ENCODE measurements at regions of chr7 and their contacts with region 1.

Region 1: DNA sequence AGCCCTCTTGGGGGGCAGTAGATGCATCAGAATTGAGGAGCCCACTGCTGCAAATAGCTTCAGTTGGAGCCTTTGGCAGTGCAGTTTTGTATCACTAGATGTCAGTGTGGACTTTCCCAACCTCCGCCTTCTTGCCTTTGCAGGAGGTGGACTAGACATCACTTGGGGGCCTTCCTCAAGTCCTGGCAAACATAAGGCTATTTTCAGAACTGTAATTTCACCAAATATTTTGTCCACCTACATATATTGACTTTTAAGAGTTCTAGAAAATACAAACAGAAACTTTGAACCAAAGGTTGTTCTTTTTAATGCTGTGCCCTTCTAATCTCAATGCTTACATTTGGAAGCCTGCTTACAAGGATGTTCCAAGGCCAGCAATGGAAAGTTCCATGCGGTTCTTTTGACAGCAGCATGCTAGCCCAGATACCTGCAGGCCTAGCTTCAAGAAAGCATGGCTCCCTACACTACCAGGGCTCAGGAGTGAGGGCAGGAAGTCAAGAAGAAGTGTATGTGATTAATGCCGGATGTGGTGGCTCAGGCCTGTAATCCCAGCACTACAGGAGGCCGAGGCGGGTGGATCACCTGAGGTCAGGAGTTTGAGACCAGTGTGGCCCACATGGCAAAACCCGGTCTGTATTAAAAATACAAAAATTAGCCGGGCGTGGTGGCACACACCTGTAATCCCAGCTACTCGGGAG is 8.0 kb upstream of the ZNRF2 start:
- DNase-seq: no peak
- ATAC-seq: peak; percentile 93
- H3K4me3 ChIP-seq: no peak overlapping the region
- H3K27ac ChIP-seq: no peak overlapping the region
- H3K4me1 ChIP-seq: peaks cover 9% of the 10 kb centered on the region; the same call in 1 of the 2 replicates
- H3K27me3 ChIP-seq: no peaks in the 10 kb centered on the region
- CTCF ChIP-seq: peak; percentile 83 to 91 (median 84)
- EP300 ChIP-seq: no peak
- POLR2A ChIP-seq: no peak
- RAD21 ChIP-seq: peak; percentile 93

Region 2: GRCh38 chr7:30173058-30173897 is 103.1 kb before region 1 on chr7:
- CTCF ChIA-PET with region 1: interaction called, 30 read pairs
- POLR2A ChIA-PET with region 1: interaction called, 3 read pairs
- RAD21 ChIA-PET with region 1: interaction called, 42 read pairs
- SMC1A ChIA-PET with region 1: interaction called, 35 read pairs
- in situ Hi-C with region 1: no loop called
- intact Hi-C with region 1: no loop called
- DNase-seq: no peak
- ATAC-seq: no peak
- H3K4me3 ChIP-seq: no peak overlapping the region
- H3K27ac ChIP-seq: no peak overlapping the region
- H3K4me1 ChIP-seq: peaks cover 15% of the 10 kb centered on the region
- H3K27me3 ChIP-seq: no peaks in the 10 kb centered on the region
- CTCF ChIP-seq: no peak
- EP300 ChIP-seq: no peak
- POLR2A ChIP-seq: no peak
- RAD21 ChIP-seq: no peak

Region 3: DNA sequence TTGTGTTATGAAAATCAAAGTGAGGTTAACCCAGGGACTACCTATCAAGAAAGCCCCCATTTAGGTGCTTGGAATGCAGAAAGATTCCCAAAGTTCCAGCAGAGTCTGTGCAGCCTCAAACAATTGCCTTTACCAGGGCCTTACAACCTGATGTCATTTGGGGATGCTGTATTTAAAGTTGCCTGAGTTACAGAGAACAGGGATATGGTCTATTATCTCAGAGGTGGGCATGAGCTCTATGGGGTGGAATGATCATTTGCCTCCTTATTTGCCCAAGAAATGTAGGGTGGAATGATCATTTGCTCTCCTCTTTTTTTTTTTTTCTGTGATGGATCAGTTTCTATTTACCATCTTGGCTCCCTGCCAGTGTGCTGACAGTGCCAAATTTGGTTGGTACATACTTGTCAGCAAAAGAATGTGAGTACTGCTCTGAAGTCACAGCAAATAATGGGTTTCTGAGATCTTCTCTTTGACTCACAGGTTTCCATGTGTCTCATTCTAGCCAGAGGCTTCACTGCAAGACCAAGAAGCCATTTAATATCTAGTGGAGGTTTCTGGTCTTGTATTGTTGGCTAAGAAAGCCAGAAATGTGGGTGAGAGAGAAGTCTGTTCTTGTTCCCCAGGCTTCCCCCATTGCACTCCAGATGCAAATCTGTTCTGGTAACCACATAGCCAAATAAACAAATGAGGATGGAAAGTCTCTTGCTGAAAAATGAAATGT is 37.5 kb before region 1 on chr7:
- CTCF ChIA-PET with region 1: interaction called, 12 read pairs
- POLR2A ChIA-PET with region 1: no interaction called
- RAD21 ChIA-PET with region 1: interaction called, 17 read pairs
- SMC1A ChIA-PET with region 1: interaction called, 8 read pairs
- in situ Hi-C with region 1: no loop called
- intact Hi-C with region 1: no loop called
- DNase-seq: peak; percentile 75
- ATAC-seq: peak; percentile 83
- H3K4me3 ChIP-seq: no peak overlapping the region; the same call in 1 of the 2 replicates
- H3K27ac ChIP-seq: peak overlapping the region; percentile 9; the same call in 1 of the 2 replicates
- H3K4me1 ChIP-seq: peaks cover 27% of the 10 kb centered on the region
- H3K27me3 ChIP-seq: no peaks in the 10 kb centered on the region
- CTCF ChIP-seq: no peak
- EP300 ChIP-seq: peak in 1 of 2 experiments; percentile 67; a peak in 2 of 4 replicates
- POLR2A ChIP-seq: no peak
- RAD21 ChIP-seq: no peak

Region 4: GRCh38 chr7:30330134-30331111 is 54.1 kb after region 1 on chr7:
- CTCF ChIA-PET with region 1: interaction called, 11 read pairs
- POLR2A ChIA-PET with region 1: no interaction called
- RAD21 ChIA-PET with region 1: interaction called, 8 read pairs
- SMC1A ChIA-PET with region 1: interaction called, 26 read pairs
- in situ Hi-C with region 1: no loop called
- intact Hi-C with region 1: no loop called
- DNase-seq: peak; percentile 74
- ATAC-seq: peak; percentile 96
- H3K4me3 ChIP-seq: peak overlapping the region; percentile 4; the same call in 1 of the 2 replicates
- H3K27ac ChIP-seq: peak overlapping the region; percentile 60
- H3K4me1 ChIP-seq: peaks cover 20% of the 10 kb centered on the region
- H3K27me3 ChIP-seq: no peaks in the 10 kb centered on the region
- CTCF ChIP-seq: no peak
- EP300 ChIP-seq: peak; percentile 49 to 53; a peak in 1 of 4 replicates
- POLR2A ChIP-seq: no peak
- RAD21 ChIP-seq: no peak

Region 5: DNA sequence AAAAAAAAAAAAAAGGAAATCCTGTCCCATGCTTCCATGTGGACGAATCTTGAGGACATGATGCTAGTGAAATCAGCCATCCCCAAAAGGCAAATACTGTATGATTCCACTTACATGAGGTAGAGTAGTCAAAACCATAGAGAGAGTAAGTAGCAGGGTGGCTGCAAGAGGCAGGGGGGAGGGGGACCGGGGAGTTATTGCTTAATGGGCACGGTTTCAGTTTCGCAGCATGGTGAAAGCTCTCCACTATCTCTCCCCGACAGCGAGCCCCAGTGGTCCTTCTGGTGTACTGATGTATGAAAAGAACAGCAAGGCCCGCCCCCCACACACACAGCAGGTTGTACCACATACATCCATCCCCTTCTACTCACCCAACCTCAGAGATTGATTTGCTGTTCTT is 169.4 kb after region 1 on chr7:
- CTCF ChIA-PET with region 1: interaction called, 19 read pairs
- POLR2A ChIA-PET with region 1: interaction called, 3 read pairs
- RAD21 ChIA-PET with region 1: interaction called, 19 read pairs
- SMC1A ChIA-PET with region 1: interaction called, 9 read pairs
- in situ Hi-C with region 1: no loop called
- intact Hi-C with region 1: loop called (anchors 10 kb)
- DNase-seq: peak; percentile 82
- ATAC-seq: peak; percentile 99
- H3K4me3 ChIP-seq: no peak overlapping the region
- H3K27ac ChIP-seq: no peak overlapping the region
- H3K4me1 ChIP-seq: peaks cover 4% of the 10 kb centered on the region
- H3K27me3 ChIP-seq: no peaks in the 10 kb centered on the region
- CTCF ChIP-seq: peak; percentile 68 to 71 (median 70)
- EP300 ChIP-seq: peak in 1 of 2 experiments; percentile 60; a peak in 2 of 4 replicates
- POLR2A ChIP-seq: no peak
- RAD21 ChIP-seq: peak; percentile 81

Region 6: DNA sequence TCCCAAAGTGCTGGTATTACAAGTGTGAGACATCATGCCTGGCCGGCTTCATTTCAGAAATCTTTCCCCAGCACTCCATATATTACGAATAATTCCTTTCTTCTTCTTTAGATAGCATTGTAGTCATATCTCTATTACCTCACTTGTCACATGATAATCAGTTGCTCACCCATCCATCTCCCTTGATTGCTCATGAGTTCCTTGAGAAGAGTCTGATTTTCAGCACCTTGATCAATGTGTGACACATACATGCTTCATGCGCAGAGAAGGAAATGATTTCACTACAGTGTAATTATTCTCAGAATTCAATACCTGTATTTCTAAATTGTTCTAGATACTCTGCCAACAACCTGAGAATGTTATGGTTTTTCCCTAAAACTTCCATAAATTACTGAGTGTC is 254.9 kb after region 1 on chr7:
- CTCF ChIA-PET with region 1: no interaction called
- POLR2A ChIA-PET with region 1: no interaction called
- RAD21 ChIA-PET with region 1: no interaction called
- SMC1A ChIA-PET with region 1: no interaction called
- in situ Hi-C with region 1: no loop called
- intact Hi-C with region 1: no loop called
- DNase-seq: no peak
- ATAC-seq: no peak
- H3K4me3 ChIP-seq: no peak overlapping the region
- H3K27ac ChIP-seq: no peak overlapping the region
- H3K4me1 ChIP-seq: no peaks in the 10 kb centered on the region
- H3K27me3 ChIP-seq: no peaks in the 10 kb centered on the region
- CTCF ChIP-seq: no peak
- EP300 ChIP-seq: no peak
- POLR2A ChIP-seq: no peak
- RAD21 ChIP-seq: no peak

Region 7: GRCh38 chr7:30548762-30549344 is 272.5 kb after region 1 on chr7:
- CTCF ChIA-PET with region 1: interaction called, 9 read pairs
- POLR2A ChIA-PET with region 1: no interaction called
- RAD21 ChIA-PET with region 1: interaction called, 11 read pairs
- SMC1A ChIA-PET with region 1: interaction called, 13 read pairs
- in situ Hi-C with region 1: no loop called
- intact Hi-C with region 1: no loop called
- DNase-seq: no peak
- ATAC-seq: peak; percentile 82
- H3K4me3 ChIP-seq: no peak overlapping the region
- H3K27ac ChIP-seq: no peak overlapping the region
- H3K4me1 ChIP-seq: peaks cover 4% of the 10 kb centered on the region; the same call in 1 of the 2 replicates
- H3K27me3 ChIP-seq: no peaks in the 10 kb centered on the region
- CTCF ChIP-seq: peak; percentile 69 to 81 (median 76)
- EP300 ChIP-seq: no peak
- POLR2A ChIP-seq: no peak
- RAD21 ChIP-seq: peak; percentile 50

Region 8: GRCh38 chr7:30911561-30911969 is 635.2 kb after region 1 on chr7 and contains the start of gene AQP1:
- CTCF ChIA-PET with region 1: no interaction called
- POLR2A ChIA-PET with region 1: no interaction called
- RAD21 ChIA-PET with region 1: no interaction called
- SMC1A ChIA-PET with region 1: no interaction called
- in situ Hi-C with region 1: no loop called
- intact Hi-C with region 1: no loop called
- DNase-seq: no peak
- ATAC-seq: no peak
- H3K4me3 ChIP-seq: no peak within 1 kb of the TSS
- H3K27ac ChIP-seq: no peak within 1 kb of the TSS
- H3K4me1 ChIP-seq: no peaks in the 10 kb centered on the region
- H3K27me3 ChIP-seq: no peaks in the 10 kb centered on the region
- CTCF ChIP-seq: no peak
- EP300 ChIP-seq: no peak
- POLR2A ChIP-seq: no peak
- RAD21 ChIP-seq: no peak
- polyA plus RNA-seq, gene AQP1: not detected